ENCODE measurements at regions of chr1 and their contacts with region 1.

Region 1: DNA sequence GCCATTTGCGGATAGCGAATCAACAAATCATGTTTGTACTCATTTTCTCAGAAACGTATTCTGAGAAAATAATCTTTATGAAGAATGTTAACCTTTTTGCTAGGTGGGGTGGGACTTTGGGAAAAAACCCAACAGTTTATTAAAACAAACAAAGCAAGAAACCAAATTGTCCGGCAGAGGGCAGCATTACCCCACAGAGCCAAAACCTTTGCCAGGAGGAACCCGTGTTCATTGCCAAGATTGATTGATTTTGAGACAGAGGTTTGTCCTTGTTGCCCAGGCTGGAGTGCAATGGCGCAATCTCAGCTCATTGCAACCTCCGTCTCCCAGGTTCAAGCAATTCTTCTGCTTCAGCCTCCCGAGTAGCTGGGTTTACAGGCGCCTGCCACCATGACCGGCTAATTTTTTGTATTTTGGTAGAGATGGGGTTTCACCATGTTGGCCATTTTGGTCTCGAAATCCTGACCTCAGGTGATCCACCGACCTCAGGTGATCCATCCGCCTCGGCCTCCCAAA is 70.8 kb upstream of the RHOU start:
- DNase-seq: peak; percentile 84
- ATAC-seq: peak; percentile 47; the same call in 1 of the 2 replicates
- H3K4me3 Mint-ChIP-seq: no peak overlapping the region
- H3K27ac Mint-ChIP-seq: no peak overlapping the region
- H3K4me1 Mint-ChIP-seq: peaks cover 6% of the 10 kb centered on the region; the same call in 1 of the 2 replicates
- H3K27me3 Mint-ChIP-seq: peaks cover 2% of the 10 kb centered on the region
- CTCF ChIP-seq: peak; percentile 80

Region 2: DNA sequence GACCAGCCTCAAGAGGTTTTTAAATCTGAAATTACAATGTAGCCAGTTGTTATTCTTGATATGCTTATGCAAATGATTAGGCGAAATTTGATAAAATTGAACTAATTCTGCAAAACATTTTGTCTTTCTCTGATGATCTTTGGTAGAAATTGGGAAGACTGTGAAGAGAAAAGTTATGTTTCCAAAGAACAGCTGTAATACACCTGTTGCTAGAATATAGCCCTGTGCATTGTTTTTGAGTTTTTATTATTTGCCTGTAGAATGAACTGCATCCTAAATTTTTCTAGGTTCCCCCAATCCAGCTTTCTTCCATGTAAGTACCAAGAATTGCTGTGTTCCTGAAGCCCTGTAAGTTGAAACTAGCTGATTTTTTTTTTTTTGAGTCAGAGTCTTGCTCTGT is 10.7 kb before region 1 on chr1:
- CTCF ChIA-PET with region 1: no interaction called
- POLR2A ChIA-PET with region 1: no interaction called
- DNase-seq: no peak
- ATAC-seq: no peak
- H3K4me3 Mint-ChIP-seq: no peak overlapping the region
- H3K27ac Mint-ChIP-seq: no peak overlapping the region
- H3K4me1 Mint-ChIP-seq: peaks cover 7% of the 10 kb centered on the region
- H3K27me3 Mint-ChIP-seq: peaks cover 36% of the 10 kb centered on the region
- CTCF ChIP-seq: no peak

Region 3: DNA sequence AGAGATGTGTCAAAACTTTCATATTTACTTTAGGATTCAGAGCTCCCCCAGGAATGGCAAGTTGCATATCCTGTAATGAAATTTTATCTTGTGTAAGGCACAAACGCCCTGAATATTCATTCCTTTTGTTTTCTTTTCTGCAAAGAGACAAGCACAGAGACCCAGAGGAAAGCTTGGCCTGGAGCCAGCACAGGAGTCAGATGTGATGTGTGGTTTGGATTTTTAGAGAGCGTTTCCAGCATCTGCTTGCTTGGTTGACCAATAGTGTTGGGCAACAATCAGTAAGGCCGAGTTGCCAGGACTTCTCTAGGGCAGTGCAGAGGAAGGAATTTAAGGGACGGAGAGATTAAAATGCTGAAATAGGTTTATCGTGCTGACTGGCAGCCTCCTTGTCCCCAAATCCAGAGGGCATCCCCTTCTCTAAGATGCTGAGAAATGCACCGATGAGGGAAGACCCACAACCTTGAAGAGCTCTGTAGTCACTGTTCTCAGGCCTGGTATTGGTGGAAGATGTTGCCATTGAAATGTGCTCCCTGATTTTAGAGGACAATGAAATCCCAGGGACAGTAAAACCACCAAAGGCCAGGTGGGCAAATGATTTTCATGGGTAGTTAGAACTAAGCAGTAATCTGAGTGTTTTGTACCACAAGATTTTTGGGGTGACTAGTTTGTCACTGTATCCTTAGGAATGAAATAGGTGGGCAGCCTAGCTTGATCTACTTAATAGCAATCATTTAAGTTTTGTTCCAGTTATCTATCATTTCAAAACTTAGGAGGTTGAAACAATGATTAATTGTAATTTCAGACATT is 33.0 kb after region 1 on chr1:
- CTCF ChIA-PET with region 1: no interaction called
- POLR2A ChIA-PET with region 1: no interaction called
- DNase-seq: no peak
- ATAC-seq: no peak
- H3K4me3 Mint-ChIP-seq: no peak overlapping the region
- H3K27ac Mint-ChIP-seq: no peak overlapping the region
- H3K4me1 Mint-ChIP-seq: peaks cover 17% of the 10 kb centered on the region
- H3K27me3 Mint-ChIP-seq: no peaks in the 10 kb centered on the region
- CTCF ChIP-seq: no peak

Region 4: DNA sequence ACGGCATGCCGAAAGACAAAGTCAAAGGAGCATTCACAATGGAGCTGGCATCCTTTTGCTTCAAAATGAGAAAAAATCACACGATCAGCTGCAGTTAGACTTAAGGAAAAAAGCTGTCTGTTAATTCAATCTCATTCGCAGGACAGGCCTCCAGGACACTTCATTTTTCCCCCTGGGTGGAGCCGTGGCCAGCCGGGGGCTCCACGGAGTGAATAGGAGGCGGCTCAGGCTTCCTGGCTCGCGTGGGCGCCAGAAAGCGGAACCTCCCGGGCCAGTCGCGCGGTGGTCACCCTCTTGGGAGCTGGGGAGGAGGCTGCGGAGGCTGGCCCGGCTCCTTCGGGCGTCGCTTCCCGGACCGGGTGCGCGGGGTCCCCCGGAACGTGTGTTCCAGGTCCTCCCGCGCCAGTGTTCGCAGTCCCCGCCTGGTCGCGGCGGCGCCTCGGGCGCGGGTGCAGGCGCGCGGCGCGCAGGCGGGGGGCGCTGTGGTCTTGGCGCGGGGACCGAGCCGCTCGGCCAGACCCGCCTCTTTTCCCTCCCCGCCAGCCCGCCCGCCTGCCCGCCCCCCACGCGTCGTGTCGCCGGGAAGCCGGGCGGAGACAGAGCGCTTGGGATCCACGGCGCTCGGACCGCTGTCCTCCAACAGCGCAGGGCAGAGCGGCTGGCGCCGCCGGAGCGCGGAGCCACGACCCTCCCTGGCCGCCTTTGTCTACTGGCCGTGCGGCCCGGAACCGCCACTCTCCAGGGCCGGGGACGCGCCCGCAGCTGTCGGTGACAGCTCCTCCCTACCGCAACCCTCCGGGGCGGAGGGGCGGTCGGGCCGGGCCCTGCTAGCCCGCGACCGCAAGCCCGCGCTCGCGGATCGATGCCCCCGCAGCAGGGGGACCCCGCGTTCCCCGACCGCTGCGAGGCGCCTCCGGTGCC is 70.7 kb after region 1 on chr1 and contains the start of gene RHOU:
- CTCF ChIA-PET with region 1: interaction called, 11 read pairs
- POLR2A ChIA-PET with region 1: no interaction called
- DNase-seq: peak; percentile 63
- ATAC-seq: peak; percentile 73
- H3K4me3 Mint-ChIP-seq: peak within 1 kb of the TSS; percentile 80
- H3K27ac Mint-ChIP-seq: no peak within 1 kb of the TSS
- H3K4me1 Mint-ChIP-seq: peaks cover 25% of the 10 kb centered on the region
- H3K27me3 Mint-ChIP-seq: peaks cover 44% of the 10 kb centered on the region
- CTCF ChIP-seq: peak; percentile 59
- total RNA-seq, gene RHOU: 5.8 to 6.0 TPM (median 5.8 TPM) in 3 replicates